ENCODE measurements at regions of chr19 and their contacts with region 1.

Region 1: DNA sequence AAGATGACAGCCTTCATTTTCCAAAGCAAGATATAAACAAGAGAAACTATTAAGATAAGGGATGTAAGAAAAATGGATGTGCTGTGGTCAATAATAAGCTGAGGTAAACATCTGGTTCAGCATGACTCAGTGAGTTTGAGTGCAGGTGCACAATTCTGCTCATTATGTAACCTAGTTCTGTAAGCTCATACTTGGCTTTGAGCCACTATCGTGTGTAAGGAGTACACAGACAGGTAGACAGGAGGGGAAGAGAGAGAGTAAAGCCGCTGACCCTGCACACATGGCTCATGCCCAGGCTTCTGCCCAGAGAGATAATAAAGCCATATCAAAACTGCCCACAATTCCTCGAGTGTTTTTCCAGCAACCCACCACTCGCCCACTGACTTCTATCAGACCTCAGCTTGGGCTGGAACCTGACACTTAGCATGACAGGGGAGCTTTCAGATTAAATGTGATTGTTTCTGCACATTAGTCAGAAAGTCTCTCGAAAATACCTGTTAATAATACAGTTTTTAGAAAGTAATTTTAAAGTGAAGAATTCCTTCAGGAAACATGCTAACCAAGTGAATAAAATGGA is 51.7 kb downstream of the ZNF91 start:
- DNase-seq: no peak
- H3K4me3 ChIP-seq: no peak overlapping the region
- H3K27ac ChIP-seq: no peak overlapping the region
- H3K4me1 ChIP-seq: no peaks in the 10 kb centered on the region
- H3K27me3 ChIP-seq: no peaks in the 10 kb centered on the region
- CTCF ChIP-seq: no peak
- POLR2A ChIP-seq: no peak

Region 2: GRCh38 chr19:23384858-23385257 is 41.3 kb after region 1 on chr19:
- intact Hi-C with region 1: loop called (anchors 5 kb)
- DNase-seq: no peak
- H3K4me3 ChIP-seq: no peak overlapping the region
- H3K27ac ChIP-seq: no peak overlapping the region
- H3K4me1 ChIP-seq: peaks cover 18% of the 10 kb centered on the region
- H3K27me3 ChIP-seq: no peaks in the 10 kb centered on the region
- CTCF ChIP-seq: no peak
- POLR2A ChIP-seq: no peak